ENCODE measurements at regions of chr3 and their contacts with region 1.

Region 1: DNA sequence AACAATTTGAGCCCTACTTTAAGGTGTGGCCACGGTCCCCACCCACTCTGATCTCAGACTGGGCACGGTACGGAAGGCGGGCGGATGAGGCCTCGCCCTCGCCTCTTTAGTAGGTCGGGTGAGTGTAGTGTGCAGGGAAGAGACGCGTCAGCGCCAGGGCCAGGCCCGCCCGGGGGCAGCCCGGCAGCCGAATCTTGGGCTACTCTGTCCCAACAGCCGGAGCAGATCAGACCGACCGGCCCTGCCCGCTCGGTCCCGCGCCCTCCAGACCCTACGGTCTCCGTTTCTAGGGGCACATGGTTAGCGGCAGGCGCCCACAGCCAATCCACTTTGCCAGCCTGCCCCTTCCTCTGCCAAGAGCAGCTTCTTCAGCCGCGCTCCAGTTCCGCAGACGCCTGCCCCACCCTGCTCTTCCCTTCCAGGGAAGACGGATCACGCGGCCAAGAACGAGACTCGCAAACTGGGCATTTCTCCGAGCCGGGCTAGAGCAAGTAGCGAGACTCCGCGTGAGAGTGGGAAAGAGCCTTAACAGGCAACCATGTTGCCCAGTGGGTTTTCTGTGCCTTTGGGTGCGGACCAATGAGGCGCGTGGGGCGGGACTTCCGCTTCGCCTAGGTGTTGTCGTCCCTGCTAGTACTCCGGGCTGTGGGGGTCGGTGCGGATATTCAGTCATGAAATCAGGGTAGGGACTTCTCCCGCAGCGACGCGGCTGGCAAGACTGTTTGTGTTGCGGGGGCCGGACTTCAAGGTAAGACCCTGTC is at the start of gene RNF13:
- DNase-seq: peak; percentile 80 to 94 (median 92)
- ATAC-seq: peak; percentile 96
- H3K4me3 ChIP-seq: peak within 1 kb of the TSS; percentile 95
- H3K4me3 Mint-ChIP-seq: peak within 1 kb of the TSS; percentile 96 to 100 (median 99)
- H3K27ac ChIP-seq: peak within 1 kb of the TSS; percentile 94
- H3K27ac Mint-ChIP-seq: peak within 1 kb of the TSS; percentile 97 to 100 (median 99)
- H3K4me1 ChIP-seq: peaks cover 16 to 34% of the 10 kb centered on the region in 2 donors
- H3K4me1 Mint-ChIP-seq: peaks cover 39 to 54% (median 47%) of the 10 kb centered on the region in 7 donors
- H3K27me3 ChIP-seq: no peaks in the 10 kb centered on the region
- H3K27me3 Mint-ChIP-seq: peaks cover 0 to 14% (median 4%) of the 10 kb centered on the region in 5 donors
- total RNA-seq, gene RNF13: 41.2 to 68.5 (median 66.1) TPM

Region 2: DNA sequence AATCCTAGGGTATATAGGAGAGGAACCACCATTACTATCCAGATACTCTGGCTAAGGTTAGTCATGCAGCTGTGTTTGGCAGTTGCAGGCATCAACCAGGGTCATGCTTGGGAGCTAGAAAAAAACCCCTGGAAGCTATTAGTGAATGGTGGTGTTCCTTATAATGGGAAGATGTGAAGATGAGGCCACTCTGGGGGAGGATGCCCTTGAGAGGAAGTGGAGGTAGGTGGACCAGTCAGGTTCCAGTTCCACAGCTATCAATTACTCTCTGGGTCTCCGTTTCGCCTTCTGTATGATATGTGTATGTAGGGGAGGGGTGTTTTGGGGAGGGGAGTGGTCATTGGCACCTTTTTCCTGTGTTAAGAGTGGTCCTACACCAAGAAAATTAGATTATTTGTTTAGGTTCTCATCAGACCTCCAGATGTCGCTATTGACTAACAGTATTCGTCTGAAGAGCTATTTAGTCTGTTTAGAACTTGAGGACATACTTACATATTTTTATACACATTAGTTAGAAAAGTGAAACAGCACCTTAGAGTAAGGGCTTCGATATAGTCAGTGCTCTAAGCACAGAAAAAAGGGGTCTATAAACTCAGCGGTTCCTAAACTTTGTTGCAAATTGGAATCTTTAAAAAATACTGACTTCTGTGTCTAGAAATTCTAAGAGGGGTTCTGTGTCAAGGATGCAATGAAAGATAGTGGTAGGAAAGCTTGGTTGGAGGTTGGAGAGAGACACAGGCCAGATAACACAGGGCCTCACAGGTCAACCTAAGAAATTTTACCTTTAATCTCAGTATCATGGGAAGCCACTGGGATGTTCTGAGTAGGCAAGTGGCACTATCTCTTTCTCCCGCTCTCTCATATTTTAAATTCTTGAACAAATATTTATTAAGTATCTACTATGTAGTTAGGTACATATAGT is 692.5 kb before region 1 on chr3:
- CTCF ChIA-PET with region 1: interaction called, 7 read pairs
- POLR2A ChIA-PET with region 1: no interaction called
- intact Hi-C with region 1: loop called in 1 of 2 experiments (anchors 2 kb)
- DNase-seq: peak in 7 of 9 donors; percentile 37 to 60 (median 49)
- ATAC-seq: peak; percentile 90
- H3K4me3 ChIP-seq: no peak overlapping the region
- H3K4me3 Mint-ChIP-seq: no peak overlapping the region
- H3K27ac ChIP-seq: no peak overlapping the region
- H3K27ac Mint-ChIP-seq: peak overlapping the region in 2 of 9 donors; percentile 3 to 74
- H3K4me1 ChIP-seq: no peaks in the 10 kb centered on the region
- H3K4me1 Mint-ChIP-seq: peaks cover 0 to 7% (median 0%) of the 10 kb centered on the region in 7 donors
- H3K27me3 ChIP-seq: no peaks in the 10 kb centered on the region
- H3K27me3 Mint-ChIP-seq: peaks cover 0 to 12% (median 8%) of the 10 kb centered on the region in 5 donors

Region 3: DNA sequence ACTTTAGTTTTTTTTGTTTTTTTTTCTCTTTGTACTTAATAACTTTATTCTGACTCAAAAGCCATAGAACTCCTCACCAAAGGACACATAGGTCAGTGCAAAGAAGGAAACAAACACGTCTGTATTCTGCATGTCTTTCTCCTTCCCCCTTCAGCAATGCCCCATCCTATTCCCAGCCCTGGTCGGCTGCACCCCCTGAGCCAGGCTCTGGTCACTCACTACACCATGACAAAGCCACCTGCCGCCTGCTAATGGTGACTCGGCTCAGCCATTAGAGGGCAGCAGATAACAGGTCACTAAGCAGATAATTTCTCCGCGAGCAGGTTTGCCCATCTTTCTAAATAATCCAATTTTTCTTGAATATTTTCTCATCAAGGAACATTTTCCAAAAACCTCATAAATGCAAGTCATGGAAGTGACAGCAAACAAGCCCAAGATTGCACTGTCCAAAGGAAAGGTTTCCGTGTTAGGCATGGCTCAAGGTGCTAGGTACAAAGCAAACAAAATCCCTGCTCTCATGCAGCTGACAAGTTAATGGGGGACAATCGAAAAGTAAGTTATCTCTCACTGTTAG is 300.5 kb before region 1 on chr3:
- CTCF ChIA-PET with region 1: no interaction called
- POLR2A ChIA-PET with region 1: no interaction called
- intact Hi-C with region 1: loop called (anchors 5 to 10 kb)
- DNase-seq: peak in 1 of 9 donors; percentile 25
- ATAC-seq: peak; percentile 52
- H3K4me3 ChIP-seq: no peak overlapping the region
- H3K4me3 Mint-ChIP-seq: peak overlapping the region in 1 of 10 donors; percentile 37
- H3K27ac ChIP-seq: no peak overlapping the region
- H3K27ac Mint-ChIP-seq: no peak overlapping the region
- H3K4me1 ChIP-seq: no peaks in the 10 kb centered on the region
- H3K4me1 Mint-ChIP-seq: peaks cover 4 to 17% (median 9%) of the 10 kb centered on the region in 7 donors
- H3K27me3 ChIP-seq: no peaks in the 10 kb centered on the region
- H3K27me3 Mint-ChIP-seq: peaks cover 16 to 30% (median 21%) of the 10 kb centered on the region in 5 donors

Region 4: GRCh38 chr3:149752051-149752787 is 60.6 kb before region 1 on chr3 and contains the start of gene COMMD2:
- CTCF ChIA-PET with region 1: interaction called, 10 read pairs
- POLR2A ChIA-PET with region 1: interaction called, 20 read pairs
- intact Hi-C with region 1: loop called (anchors 1 kb)
- DNase-seq: peak; percentile 52 to 76 (median 63)
- ATAC-seq: peak; percentile 91
- H3K4me3 ChIP-seq: peak within 1 kb of the TSS; percentile 81
- H3K4me3 Mint-ChIP-seq: peak within 1 kb of the TSS; percentile 94 to 98 (median 96)
- H3K27ac ChIP-seq: peak within 1 kb of the TSS; percentile 73
- H3K27ac Mint-ChIP-seq: peak within 1 kb of the TSS; percentile 90 to 97 (median 96)
- H3K4me1 ChIP-seq: peaks cover 9 to 20% of the 10 kb centered on the region in 2 donors
- H3K4me1 Mint-ChIP-seq: peaks cover 12 to 56% (median 32%) of the 10 kb centered on the region in 7 donors
- H3K27me3 ChIP-seq: no peaks in the 10 kb centered on the region
- H3K27me3 Mint-ChIP-seq: peaks cover 0 to 2% (median 0%) of the 10 kb centered on the region in 5 donors
- total RNA-seq, gene COMMD2: 29.9 to 44.4 (median 33.4) TPM

Region 5: GRCh38 chr3:149969940-149970715 is 157.3 kb after region 1 on chr3:
- CTCF ChIA-PET with region 1: interaction called, 3 read pairs
- POLR2A ChIA-PET with region 1: no interaction called
- intact Hi-C with region 1: loop called (anchors 1 to 2 kb)
- DNase-seq: peak; percentile 54 to 81 (median 75)
- ATAC-seq: peak; percentile 64
- H3K4me3 ChIP-seq: peak overlapping the region; percentile 53
- H3K4me3 Mint-ChIP-seq: peak overlapping the region; percentile 85 to 96 (median 92)
- H3K27ac ChIP-seq: peak overlapping the region; percentile 63
- H3K27ac Mint-ChIP-seq: peak overlapping the region in 8 of 9 donors; percentile 60 to 94 (median 86)
- H3K4me1 ChIP-seq: peaks cover 0 to 4% of the 10 kb centered on the region in 2 donors
- H3K4me1 Mint-ChIP-seq: peaks cover 16 to 26% (median 20%) of the 10 kb centered on the region in 7 donors
- H3K27me3 ChIP-seq: peaks cover 0 to 5% of the 10 kb centered on the region in 2 donors
- H3K27me3 Mint-ChIP-seq: peaks cover 6 to 55% (median 26%) of the 10 kb centered on the region in 5 donors

Region 6: DNA sequence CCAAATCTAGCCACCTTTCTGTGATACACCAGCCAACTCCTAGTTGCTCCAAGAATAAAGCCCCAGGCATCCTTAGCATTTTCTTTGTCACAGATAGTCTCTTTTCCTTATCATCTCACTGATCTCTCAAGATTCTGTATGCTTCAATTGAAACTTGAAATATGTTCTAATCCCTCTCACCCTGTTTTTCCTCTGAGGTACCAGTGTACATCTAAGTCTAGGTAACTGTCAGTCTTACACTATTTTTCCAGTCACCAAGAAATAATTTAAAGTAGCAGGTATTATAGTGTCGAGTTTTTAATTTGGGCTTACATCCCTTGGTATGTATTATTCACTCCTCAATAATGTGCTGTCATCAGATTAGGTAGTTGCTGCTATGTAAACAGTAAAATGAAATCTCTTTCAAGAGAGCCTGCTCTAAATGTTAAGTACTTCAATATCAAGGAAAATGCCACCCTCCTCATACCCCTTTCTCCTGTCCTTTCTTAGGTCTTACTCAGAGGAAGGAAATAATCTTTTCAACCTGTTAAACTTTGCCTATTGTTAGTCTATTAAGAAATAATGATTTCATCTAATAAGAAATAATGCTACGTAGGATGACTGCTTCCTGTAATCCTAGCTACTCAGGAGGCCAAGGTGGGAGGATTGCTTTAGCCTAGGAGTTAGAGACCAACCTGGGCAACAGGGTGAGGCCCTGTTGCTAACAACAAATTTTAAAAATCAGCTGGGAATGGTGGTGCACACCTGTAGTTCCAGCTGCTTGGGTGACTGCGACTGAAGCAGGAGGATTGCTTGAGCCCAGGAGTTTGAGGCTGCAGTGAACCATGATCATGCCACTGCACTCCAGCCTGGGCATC is 635.1 kb after region 1 on chr3:
- CTCF ChIA-PET with region 1: no interaction called
- POLR2A ChIA-PET with region 1: no interaction called
- intact Hi-C with region 1: no loop called
- DNase-seq: no peak
- ATAC-seq: no peak
- H3K4me3 ChIP-seq: no peak overlapping the region
- H3K4me3 Mint-ChIP-seq: no peak overlapping the region
- H3K27ac ChIP-seq: no peak overlapping the region
- H3K27ac Mint-ChIP-seq: peak overlapping the region in 5 of 9 donors; percentile 0 to 38 (median 17)
- H3K4me1 ChIP-seq: peaks cover 3 to 4% of the 10 kb centered on the region in 2 donors
- H3K4me1 Mint-ChIP-seq: peaks cover 19 to 59% (median 52%) of the 10 kb centered on the region in 7 donors
- H3K27me3 ChIP-seq: no peaks in the 10 kb centered on the region
- H3K27me3 Mint-ChIP-seq: no peaks in the 10 kb centered on the region

Region 7: DNA sequence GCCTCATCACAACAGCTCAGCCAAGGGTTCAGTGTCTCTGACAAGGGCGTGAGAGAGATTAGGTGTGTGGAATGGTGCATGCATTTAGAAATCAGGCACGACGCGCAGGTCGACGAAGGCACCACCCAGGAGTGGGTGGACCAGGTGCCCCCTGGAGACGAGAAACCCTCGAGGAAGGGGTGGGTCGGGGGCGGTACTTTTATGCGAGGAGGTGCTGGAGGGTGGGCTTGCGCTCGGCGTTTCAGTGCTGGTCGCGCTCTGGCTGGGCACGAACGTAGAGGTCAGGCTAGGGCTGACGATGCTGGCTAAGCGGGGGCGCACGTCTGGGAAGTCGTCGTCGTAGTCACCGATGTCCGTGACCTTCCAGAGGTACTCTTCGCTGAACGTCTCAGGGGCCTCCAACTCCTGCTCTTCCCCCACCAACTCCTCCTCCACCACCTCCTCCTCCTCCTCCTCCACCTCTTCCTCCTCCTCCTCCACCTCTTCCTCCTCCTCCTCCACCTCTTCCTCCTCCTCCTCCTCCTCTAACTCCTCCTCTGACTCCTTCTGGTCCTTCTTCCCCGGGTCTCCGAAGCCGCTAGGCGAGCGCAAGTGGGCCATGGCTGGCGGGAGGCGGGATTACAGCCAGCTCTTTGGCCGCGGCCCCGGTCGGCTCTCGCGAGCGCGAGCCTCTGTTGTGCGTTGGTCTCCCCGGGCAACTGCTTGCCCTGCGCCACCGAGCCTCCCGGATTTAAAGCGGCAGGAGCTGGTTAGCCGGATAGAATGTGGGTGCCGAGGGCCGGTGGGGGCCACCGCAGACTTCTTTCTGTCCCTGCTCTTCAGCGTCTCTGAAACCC is 890.7 kb after region 1 on chr3 and contains the start of gene ERICH6:
- CTCF ChIA-PET with region 1: no interaction called
- POLR2A ChIA-PET with region 1: no interaction called
- intact Hi-C with region 1: loop called (anchors 2 to 10 kb)
- DNase-seq: peak; percentile 59 to 83 (median 71)
- ATAC-seq: peak; percentile 93
- H3K4me3 ChIP-seq: peak within 1 kb of the TSS; percentile 94
- H3K4me3 Mint-ChIP-seq: peak within 1 kb of the TSS; percentile 82 to 98 (median 97)
- H3K27ac ChIP-seq: peak within 1 kb of the TSS; percentile 84
- H3K27ac Mint-ChIP-seq: peak within 1 kb of the TSS; percentile 93 to 100 (median 97)
- H3K4me1 ChIP-seq: peaks cover 4 to 5% of the 10 kb centered on the region in 2 donors
- H3K4me1 Mint-ChIP-seq: peaks cover 11 to 24% (median 20%) of the 10 kb centered on the region in 7 donors
- H3K27me3 ChIP-seq: no peaks in the 10 kb centered on the region
- H3K27me3 Mint-ChIP-seq: peaks cover 0 to 6% (median 0%) of the 10 kb centered on the region in 5 donors
- total RNA-seq, gene ERICH6: 0.24 to 1.4 (median 0.53) TPM